Colonic mucosa (tissue), 4 donors: ENCODE measurements at regions of chr1 and their contacts with region 1.

Region 1: DNA sequence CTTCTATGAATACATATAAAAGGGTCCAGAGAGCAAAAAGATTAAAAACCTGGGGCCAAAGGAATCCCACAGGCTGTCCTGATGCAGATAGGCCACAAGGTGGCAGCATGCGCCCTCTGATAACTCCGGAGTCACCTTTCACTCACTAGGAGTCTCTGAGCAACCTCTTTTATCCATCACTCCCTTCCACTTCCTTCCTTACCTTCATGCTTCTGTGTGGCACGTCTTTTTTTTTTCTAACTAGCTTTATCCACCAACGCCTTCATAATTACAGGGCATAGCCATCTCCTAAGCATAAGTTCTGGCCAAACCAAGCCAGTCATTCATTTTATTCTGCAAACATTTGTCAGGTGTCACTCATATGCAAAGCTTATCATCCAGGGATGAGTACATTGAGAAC is 3.9 kb upstream of the PGLYRP4 start:
- DNase-seq: peak; percentile 72
- H3K4me3 ChIP-seq: no peak overlapping the region
- H3K27ac ChIP-seq: no peak overlapping the region
- H3K4me1 ChIP-seq: no peaks in the 10 kb centered on the region
- H3K27me3 ChIP-seq: no peaks in the 10 kb centered on the region
- CTCF ChIP-seq: peak; percentile 92

Region 2: DNA sequence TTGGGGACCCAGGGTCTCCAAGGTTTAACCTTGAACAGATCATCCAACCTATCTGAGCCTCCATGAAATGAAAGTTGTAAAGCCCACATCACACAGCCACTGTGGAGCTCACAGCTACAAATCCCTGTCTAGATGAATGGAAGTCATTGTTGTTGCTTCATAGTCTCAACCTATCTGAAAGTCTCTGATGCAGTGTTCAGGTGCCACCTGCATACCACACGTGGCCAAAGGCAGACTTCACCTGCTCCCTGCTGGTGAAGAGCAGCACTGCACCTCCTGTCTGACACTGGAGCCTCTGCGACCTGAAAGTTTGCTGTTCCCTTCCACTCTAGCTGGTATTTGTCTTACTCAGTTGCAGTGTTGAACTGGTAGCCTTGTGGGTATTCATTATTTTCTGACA is 74.7 kb before region 1 on chr1:
- intact Hi-C with region 1: no loop called
- DNase-seq: peak; percentile 49
- H3K4me3 ChIP-seq: no peak overlapping the region
- H3K27ac ChIP-seq: no peak overlapping the region
- H3K4me1 ChIP-seq: no peaks in the 10 kb centered on the region
- H3K27me3 ChIP-seq: no peaks in the 10 kb centered on the region
- CTCF ChIP-seq: peak; percentile 81

Region 3: DNA sequence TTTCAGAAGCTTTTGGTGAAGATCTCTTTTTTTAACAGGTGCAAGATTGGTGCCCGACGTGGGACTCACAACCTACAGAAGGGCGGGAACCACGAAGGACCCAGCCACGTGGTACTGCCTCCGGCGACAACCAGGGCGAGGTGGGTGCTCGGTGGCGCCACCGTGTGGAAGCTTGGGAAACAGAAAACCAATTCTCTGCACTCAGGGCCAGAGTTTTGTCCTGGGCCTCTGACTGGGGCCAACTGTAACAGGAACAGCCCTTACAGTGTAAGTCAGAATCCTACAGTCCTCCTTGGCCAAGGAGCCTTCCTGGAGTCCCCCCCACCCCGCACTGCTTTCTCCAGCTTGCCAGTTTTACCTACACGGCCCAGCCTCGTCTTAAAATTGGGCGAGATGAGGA is 52.2 kb after region 1 on chr1:
- intact Hi-C with region 1: loop called (anchors 10 kb)
- DNase-seq: peak; percentile 61
- H3K4me3 ChIP-seq: no peak overlapping the region
- H3K27ac ChIP-seq: no peak overlapping the region
- H3K4me1 ChIP-seq: no peaks in the 10 kb centered on the region
- H3K27me3 ChIP-seq: no peaks in the 10 kb centered on the region
- CTCF ChIP-seq: peak; percentile 37

Region 4: DNA sequence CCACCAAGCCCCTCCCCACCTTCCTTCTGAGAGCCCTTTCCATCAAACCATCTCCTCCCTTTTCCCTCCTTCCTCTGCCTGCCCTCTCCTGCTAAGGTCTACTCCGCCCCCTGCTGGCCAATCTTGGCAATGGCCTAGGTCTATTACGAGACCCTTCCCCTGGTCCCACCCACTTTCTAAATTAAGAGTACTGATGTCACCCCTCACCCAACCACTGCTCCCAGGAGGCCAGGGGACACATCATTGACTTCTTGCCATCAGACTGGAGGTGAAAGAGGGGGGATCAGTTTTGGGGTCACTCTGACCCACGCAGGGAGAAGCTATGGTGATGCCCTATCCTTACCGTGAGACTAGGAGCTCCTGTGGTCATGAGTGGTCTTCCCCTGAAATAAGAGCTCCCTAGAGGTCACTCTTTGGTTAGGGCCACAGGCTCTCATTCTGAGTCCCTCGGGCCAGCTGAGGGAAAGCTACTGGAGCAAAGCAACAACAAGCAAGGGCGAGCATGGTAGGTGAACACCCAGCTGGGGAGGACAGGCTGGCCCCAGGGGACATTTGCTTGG is 142.5 kb after region 1 on chr1:
- intact Hi-C with region 1: loop called (anchors 1 kb)
- DNase-seq: peak; percentile 82
- H3K4me3 ChIP-seq: no peak overlapping the region
- H3K27ac ChIP-seq: no peak overlapping the region
- H3K4me1 ChIP-seq: no peaks in the 10 kb centered on the region
- H3K27me3 ChIP-seq: no peaks in the 10 kb centered on the region
- CTCF ChIP-seq: peak; percentile 92